ENCODE measurements at regions of chr15 and their contacts with region 1.

Region 1: GRCh38 chr15:68763063-68763462 is 57.6 kb downstream of the ANP32A start:
- DNase-seq: no peak
- ATAC-seq: no peak
- H3K4me3 ChIP-seq: no peak overlapping the region
- H3K27ac ChIP-seq: no peak overlapping the region
- H3K4me1 ChIP-seq: no peaks in the 10 kb centered on the region
- H3K27me3 ChIP-seq: peaks cover 12% of the 10 kb centered on the region; the same call in 1 of the 2 replicates
- CTCF ChIP-seq: no peak

Region 2: GRCh38 chr15:68749793-68750192 is 13.3 kb before region 1 on chr15:
- CTCF ChIA-PET with region 1: no interaction called
- POLR2A ChIA-PET with region 1: interaction called, 10 read pairs
- in situ Hi-C with region 1: no loop called
- intact Hi-C with region 1: no loop called
- DNase-seq: no peak
- ATAC-seq: no peak
- H3K4me3 ChIP-seq: no peak overlapping the region
- H3K27ac ChIP-seq: no peak overlapping the region
- H3K4me1 ChIP-seq: no peaks in the 10 kb centered on the region
- H3K27me3 ChIP-seq: no peaks in the 10 kb centered on the region
- CTCF ChIP-seq: no peak

Measured in Panc1 (cell line).